ENCODE measurements at regions of chr4 and their contacts with region 1.

Region 1: GRCh38 chr4:109424093-109424841 is 9.3 kb upstream of the SEC24B start:
- DNase-seq: no peak
- ATAC-seq: no peak

Region 2: DNA sequence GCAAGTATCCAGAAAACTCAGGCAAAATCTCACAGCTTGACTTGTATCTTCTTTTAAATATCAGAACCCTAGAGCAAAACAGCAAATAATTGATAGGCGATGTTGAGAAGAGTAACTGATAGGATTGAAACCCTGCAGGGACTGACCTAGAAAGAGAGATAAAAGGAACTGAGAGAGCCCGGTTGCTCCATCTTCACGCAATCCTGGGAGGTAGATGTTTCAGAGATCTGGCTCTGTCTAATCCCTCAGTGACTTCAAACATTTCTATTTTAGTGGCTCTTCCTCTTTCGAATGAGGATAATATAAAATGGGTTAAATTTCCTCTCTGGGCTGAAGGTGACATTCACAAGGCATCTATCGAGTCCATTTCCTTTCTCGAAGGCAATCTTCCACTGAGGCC is 843.2 kb before region 1 on chr4:
- intact Hi-C with region 1: no loop called
- DNase-seq: no peak
- ATAC-seq: no peak

Region 3: GRCh38 chr4:109164011-109164410 is 260.3 kb before region 1 on chr4:
- intact Hi-C with region 1: no loop called
- DNase-seq: no peak
- ATAC-seq: no peak

Region 4: DNA sequence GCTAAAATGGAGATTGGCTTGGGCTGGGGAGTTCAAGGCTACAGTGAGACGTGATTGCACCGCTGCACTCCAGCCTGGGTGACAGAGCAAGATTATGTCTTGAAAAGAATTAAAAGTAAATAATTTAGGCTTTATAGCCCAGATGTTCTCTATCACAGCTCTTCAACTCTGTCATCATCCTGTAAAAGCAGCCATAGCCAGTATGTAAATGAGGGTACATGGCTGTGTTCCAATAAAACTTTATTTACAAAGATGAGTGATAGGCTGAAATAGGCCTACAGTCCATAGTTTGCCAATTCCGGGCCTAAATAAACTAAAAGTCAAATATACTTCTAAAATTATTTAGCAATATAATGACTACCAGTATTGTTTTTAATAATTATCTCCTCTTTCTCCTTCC is 412.7 kb after region 1 on chr4:
- intact Hi-C with region 1: loop called (anchors 10 kb)
- DNase-seq: no peak
- ATAC-seq: no peak

Region 5: DNA sequence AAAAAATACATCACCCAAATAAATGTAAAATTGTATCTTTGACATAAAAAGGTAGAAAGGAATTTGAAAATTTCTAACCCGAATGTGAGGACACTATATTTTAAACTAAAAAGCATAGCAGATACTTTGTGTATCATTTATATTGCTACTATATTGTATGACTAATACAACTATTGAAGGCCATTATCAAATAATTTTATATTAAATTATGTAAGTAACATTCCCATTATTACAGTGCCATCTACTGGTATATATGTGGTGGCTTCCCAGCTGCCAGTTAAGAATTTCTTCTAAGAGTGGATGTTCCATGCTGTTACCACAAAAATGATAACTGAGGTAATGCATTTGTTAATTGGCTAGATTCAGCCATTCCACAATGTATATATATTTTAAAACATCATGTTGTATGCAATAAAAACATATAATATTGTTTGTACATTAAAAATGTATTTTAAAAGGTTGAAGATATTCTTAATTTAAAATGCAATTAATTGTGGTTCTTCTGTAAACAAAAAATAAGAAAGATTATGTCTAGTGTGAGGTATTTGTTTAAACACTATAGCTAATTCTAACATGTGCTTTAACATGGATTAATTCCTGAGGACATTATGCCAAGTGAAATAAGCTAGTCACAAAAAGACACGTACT is 553.7 kb after region 1 on chr4:
- intact Hi-C with region 1: loop called (anchors 10 kb)
- DNase-seq: no peak
- ATAC-seq: no peak